HCT116 (cell line): ENCODE measurements at regions of chr1 and their contacts with region 1.

Region 1: GRCh38 chr1:169240449-169241237 is 127.0 kb downstream of the NME7 start:
- DNase-seq: no peak
- ATAC-seq: no peak
- H3K4me3 ChIP-seq: no peak overlapping the region
- H3K27ac ChIP-seq: no peak overlapping the region
- H3K4me1 ChIP-seq: peaks cover 0 to 10% of the 10 kb centered on the region in 2 experiments; a peak in 2 of 4 replicates
- H3K27me3 ChIP-seq: no peaks in the 10 kb centered on the region
- CTCF ChIP-seq: no peak
- POLR2A ChIP-seq: no peak
- RAD21 ChIP-seq: no peak

Region 2: DNA sequence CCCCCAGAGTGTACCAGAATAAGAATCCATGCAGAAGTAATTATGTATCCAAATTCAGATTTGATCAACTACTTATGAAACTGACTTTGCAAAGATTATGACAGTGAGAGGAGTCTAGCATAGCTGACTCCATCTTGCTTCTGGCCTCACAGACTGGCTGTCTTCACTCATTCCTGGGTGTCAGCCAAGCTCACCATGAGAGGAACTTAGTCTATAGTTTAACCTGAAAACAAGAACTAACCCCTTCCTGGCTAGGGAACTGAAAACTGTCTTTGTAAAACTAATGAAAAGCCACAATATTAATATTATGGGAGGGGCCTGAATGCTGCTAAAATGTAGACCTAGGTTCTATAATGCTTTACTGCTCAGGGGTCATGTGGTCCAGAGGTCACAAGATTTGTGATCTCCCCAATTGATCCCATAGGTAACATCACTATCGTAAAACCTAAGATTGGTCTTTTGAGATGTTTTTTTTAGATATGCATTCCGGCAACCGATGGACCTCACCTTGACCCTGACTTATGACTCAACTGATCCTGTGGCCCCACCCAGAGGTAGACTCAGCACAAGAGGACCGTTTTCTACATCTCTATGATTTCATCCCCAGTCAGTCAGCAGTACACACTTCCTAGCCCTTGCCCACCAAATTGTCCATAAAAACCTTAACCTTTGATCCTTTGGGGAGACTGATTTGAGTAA is 79.0 kb before region 1 on chr1:
- CTCF ChIA-PET with region 1: no interaction called
- POLR2A ChIA-PET with region 1: no interaction called
- RAD21 ChIA-PET with region 1: no interaction called
- intact Hi-C with region 1: no loop called
- DNase-seq: peak; percentile 19
- ATAC-seq: peak; percentile 70
- H3K4me3 ChIP-seq: no peak overlapping the region
- H3K27ac ChIP-seq: no peak overlapping the region
- H3K4me1 ChIP-seq: peaks cover 16 to 31% of the 10 kb centered on the region in 2 experiments
- H3K27me3 ChIP-seq: no peaks in the 10 kb centered on the region
- CTCF ChIP-seq: no peak
- POLR2A ChIP-seq: no peak
- RAD21 ChIP-seq: peak; percentile 48; the same call in 1 of the 2 replicates

Region 3: DNA sequence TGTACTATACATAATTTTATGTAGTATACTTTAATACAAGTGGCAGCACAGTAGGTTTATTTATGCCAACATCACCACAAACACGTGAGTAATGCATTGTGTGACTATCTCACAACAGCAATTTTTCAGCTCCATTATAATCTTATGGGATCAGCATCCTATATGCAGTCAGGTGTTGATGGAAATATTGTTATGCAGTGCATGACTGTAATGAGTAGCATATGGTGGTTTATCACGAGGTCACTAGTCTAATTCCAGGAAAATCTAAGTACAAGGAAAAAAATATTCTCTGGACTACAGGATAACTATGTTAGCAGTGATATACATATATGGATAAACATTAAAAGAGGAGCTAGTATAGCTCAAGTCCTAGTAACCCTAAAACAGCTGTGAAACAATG is 65.2 kb before region 1 on chr1:
- CTCF ChIA-PET with region 1: no interaction called
- POLR2A ChIA-PET with region 1: no interaction called
- RAD21 ChIA-PET with region 1: no interaction called
- intact Hi-C with region 1: no loop called
- DNase-seq: no peak
- ATAC-seq: no peak
- H3K4me3 ChIP-seq: no peak overlapping the region
- H3K27ac ChIP-seq: no peak overlapping the region
- H3K4me1 ChIP-seq: no peaks in the 10 kb centered on the region
- H3K27me3 ChIP-seq: no peaks in the 10 kb centered on the region
- CTCF ChIP-seq: no peak
- POLR2A ChIP-seq: no peak
- RAD21 ChIP-seq: no peak

Region 4: DNA sequence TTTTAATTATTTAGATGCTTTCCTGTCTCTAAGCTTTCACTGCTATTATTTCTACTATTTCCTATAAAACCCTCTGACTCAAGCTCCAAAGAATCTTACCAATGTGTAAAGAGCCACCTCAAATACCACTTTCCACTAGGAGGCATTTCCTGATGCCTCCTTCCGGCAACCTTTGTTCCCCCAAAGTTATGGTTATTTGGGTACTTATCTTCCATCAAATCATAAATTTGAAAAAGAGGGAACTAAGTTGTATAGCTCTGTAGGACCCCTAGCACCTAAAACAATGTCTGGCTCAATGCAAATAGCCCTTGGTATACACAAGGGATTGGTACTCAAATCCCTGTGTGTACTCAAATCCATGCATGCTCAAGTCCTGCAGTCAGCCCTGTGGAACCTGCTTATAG is 47.4 kb after region 1 on chr1:
- CTCF ChIA-PET with region 1: no interaction called
- POLR2A ChIA-PET with region 1: no interaction called
- RAD21 ChIA-PET with region 1: no interaction called
- intact Hi-C with region 1: loop called (anchors 5 kb)
- DNase-seq: peak; percentile 28
- ATAC-seq: peak; percentile 83
- H3K4me3 ChIP-seq: 0 out of 4 replicates have a peak overlapping the region, but pooled peaks of 1 of the 2 experiments have one; percentile 14
- H3K27ac ChIP-seq: peak overlapping the region; percentile 8; the same call in 1 of the 2 replicates
- H3K4me1 ChIP-seq: peaks cover 17 to 26% of the 10 kb centered on the region in 2 experiments
- H3K27me3 ChIP-seq: no peaks in the 10 kb centered on the region
- CTCF ChIP-seq: no peak; a peak in 1 of 6 replicates
- POLR2A ChIP-seq: no peak
- RAD21 ChIP-seq: no peak